ENCODE measurements at regions of chr11 and their contacts with region 1.

Region 1: GRCh38 chr11:36478700-36479329 is 31.3 kb downstream of the TRAF6 start:
- DNase-seq: no peak
- H3K4me3 ChIP-seq: no peak overlapping the region
- H3K27ac ChIP-seq: no peak overlapping the region
- H3K27me3 ChIP-seq: no peaks in the 10 kb centered on the region
- CTCF ChIP-seq: peak; percentile 77

Region 2: DNA sequence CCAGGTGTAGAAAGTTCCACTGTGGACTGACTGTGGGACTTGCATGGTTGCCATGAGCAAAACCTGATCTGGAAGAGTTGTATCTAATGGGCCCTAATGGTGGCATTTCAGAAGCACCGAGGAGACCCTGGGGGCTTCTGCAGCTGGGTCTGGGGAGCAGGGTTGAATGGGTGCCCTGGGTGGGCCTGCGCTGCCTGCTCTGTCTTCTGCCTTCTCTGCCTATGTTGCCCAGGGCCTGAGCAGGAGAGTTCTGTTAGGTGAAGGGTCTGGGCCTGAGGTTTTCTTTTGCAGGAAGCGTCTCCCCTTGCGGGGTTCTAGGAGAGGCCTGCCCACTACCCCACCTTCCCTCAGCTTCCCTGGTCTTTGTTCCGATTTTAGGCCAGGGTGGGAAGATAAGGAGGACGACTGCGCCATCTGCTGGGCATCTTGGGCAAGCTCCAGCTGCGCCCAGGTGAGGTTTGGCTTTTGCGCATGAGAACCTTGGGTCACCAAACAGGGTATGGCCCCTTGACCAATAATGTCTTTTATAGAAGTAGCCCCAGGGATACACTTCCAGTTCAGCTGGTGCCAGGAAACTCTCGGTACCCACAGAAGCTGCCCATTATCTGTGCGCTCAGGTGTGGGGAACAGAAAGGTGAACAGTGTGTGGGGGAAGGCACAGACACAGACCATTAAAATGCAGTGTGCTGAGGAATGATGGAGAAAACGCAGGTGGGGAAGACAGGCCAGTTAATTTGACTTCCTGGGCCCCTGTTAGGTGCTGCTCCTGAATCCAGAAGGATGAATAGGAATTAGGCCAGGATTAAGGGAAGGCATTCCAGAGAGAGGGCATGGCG is 212.8 kb before region 1 on chr11:
- CTCF ChIA-PET with region 1: interaction called, 15 read pairs
- POLR2A ChIA-PET with region 1: no interaction called
- DNase-seq: no peak
- H3K4me3 ChIP-seq: no peak overlapping the region
- H3K27ac ChIP-seq: no peak overlapping the region
- H3K27me3 ChIP-seq: peaks cover 8% of the 10 kb centered on the region
- CTCF ChIP-seq: peak; percentile 89

Region 3: DNA sequence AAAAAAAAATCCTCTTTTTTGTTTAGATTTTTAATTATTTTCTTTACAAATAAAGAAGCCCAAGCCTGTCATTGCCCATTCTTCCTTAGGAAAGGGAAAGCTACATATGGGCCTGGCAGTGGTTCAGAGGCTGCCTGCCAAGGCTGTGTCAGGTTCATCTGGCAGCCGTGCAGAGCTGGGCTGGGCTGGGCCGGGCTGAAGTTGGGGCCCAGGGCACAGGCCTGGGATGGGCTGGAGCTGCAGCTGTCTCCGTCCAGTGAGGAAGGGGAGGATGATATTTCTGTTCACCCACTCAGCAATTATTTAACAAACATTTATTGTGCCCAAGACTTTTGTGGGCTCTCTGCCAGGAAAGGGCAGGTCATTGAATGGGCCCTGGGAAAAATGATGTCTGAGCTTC is 178.2 kb before region 1 on chr11:
- CTCF ChIA-PET with region 1: interaction called, 279 read pairs
- POLR2A ChIA-PET with region 1: no interaction called
- DNase-seq: no peak
- H3K4me3 ChIP-seq: no peak overlapping the region
- H3K27ac ChIP-seq: no peak overlapping the region
- H3K27me3 ChIP-seq: no peaks in the 10 kb centered on the region
- CTCF ChIP-seq: no peak

Region 4: GRCh38 chr11:36376888-36377758 is 101.7 kb before region 1 on chr11:
- CTCF ChIA-PET with region 1: interaction called, 34 read pairs
- POLR2A ChIA-PET with region 1: no interaction called
- DNase-seq: no peak
- H3K4me3 ChIP-seq: peak overlapping the region; percentile 70
- H3K27ac ChIP-seq: no peak overlapping the region
- H3K27me3 ChIP-seq: no peaks in the 10 kb centered on the region
- CTCF ChIP-seq: peak; percentile 73

Region 5: GRCh38 chr11:36492724-36493304 is 14.0 kb after region 1 on chr11:
- CTCF ChIA-PET with region 1: interaction called, 69 read pairs
- POLR2A ChIA-PET with region 1: no interaction called
- DNase-seq: no peak
- H3K4me3 ChIP-seq: no peak overlapping the region
- H3K27ac ChIP-seq: no peak overlapping the region
- H3K27me3 ChIP-seq: no peaks in the 10 kb centered on the region
- CTCF ChIP-seq: peak; percentile 79

Measured in AG04450 (cell line).